Activated CD4-positive, alpha-beta memory T cell treated with anti-CD3 and anti-CD28 coated beads for 36 hours (primary cell): ENCODE measurements at regions of chr3 and their contacts with region 1.

Region 1: DNA sequence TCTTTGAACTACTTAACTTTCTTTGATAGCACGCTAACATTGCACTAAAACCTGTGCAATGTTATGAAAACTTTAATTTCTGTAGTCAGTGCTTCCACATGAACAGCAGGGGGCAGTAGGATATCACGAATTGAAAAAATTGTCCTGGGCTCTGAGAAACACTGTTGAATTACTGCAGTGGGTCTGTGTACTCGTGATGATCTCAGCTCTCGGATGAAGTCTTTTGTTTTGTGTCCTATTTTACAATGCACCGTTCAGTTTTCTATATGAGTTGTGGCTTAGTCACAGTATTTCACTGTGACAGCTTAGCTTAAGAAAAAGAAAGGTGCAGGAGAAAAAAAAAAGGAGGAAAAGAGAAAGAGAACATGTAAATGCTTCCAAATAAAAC is 141.3 kb upstream of the CCDC54 start:
- DNase-seq: peak; percentile 49
- H3K4me3 Mint-ChIP-seq: peak overlapping the region; percentile 20
- H3K27ac Mint-ChIP-seq: no peak overlapping the region
- H3K4me1 Mint-ChIP-seq: peaks cover 6% of the 10 kb centered on the region
- H3K27me3 Mint-ChIP-seq: peaks cover 10% of the 10 kb centered on the region

Region 2: DNA sequence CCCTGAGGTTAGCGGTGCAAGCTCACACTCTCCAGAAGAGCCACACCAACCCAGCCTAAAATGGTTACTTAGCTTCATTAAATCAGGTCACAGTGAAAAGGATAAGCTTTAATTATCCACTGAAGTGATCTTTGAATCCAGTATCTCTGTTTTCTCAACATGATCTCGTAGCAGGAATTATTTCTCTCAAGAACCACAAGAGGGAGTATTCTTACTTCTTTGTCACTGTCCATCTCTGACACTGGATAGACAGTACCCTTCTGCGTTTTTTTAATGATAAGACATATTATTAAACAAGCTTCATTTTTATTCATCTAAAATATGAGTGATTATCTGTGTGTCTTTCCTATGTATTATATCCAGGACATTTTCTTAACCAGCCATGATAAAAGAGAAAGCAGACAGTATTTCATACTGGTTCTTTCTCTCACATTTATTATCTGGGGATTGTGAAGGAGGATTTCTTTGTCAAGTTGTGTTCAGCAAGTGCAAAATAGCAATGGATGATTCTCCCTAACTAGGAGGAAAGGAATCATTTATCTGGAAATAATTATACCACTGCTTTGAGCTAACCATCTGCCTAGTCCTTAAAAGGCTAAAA is 36.0 kb after region 1 on chr3:
- CTCF ChIA-PET with region 1: interaction called, 24 read pairs
- POLR2A ChIA-PET with region 1: no interaction called
- intact Hi-C with region 1: loop called (anchors 1 kb)
- DNase-seq: no peak
- H3K4me3 Mint-ChIP-seq: no peak overlapping the region
- H3K27ac Mint-ChIP-seq: no peak overlapping the region
- H3K4me1 Mint-ChIP-seq: no peaks in the 10 kb centered on the region
- H3K27me3 Mint-ChIP-seq: peaks cover 18% of the 10 kb centered on the region

Region 3: DNA sequence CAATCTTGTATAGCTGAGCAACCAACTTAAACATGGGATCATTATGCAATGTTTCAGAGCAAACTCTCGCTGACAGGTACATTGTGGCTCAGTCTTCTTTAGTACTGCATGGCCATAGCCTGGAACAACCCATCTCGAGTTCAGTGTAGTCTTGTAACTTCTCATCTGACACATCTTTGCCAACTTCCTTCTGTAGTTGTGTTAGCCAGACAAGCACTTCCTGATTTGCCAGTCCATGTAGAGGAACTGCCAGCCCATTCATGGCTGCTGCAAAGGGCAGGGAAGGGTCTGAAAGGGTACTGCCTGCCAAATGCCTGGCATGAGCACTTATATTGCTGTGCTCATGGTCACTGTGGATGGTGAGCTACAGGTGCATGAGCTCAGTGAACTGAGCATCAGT is 92.1 kb after region 1 on chr3:
- CTCF ChIA-PET with region 1: no interaction called
- POLR2A ChIA-PET with region 1: no interaction called
- intact Hi-C with region 1: no loop called
- DNase-seq: no peak
- H3K4me3 Mint-ChIP-seq: no peak overlapping the region
- H3K27ac Mint-ChIP-seq: no peak overlapping the region
- H3K4me1 Mint-ChIP-seq: no peaks in the 10 kb centered on the region
- H3K27me3 Mint-ChIP-seq: no peaks in the 10 kb centered on the region

Region 4: DNA sequence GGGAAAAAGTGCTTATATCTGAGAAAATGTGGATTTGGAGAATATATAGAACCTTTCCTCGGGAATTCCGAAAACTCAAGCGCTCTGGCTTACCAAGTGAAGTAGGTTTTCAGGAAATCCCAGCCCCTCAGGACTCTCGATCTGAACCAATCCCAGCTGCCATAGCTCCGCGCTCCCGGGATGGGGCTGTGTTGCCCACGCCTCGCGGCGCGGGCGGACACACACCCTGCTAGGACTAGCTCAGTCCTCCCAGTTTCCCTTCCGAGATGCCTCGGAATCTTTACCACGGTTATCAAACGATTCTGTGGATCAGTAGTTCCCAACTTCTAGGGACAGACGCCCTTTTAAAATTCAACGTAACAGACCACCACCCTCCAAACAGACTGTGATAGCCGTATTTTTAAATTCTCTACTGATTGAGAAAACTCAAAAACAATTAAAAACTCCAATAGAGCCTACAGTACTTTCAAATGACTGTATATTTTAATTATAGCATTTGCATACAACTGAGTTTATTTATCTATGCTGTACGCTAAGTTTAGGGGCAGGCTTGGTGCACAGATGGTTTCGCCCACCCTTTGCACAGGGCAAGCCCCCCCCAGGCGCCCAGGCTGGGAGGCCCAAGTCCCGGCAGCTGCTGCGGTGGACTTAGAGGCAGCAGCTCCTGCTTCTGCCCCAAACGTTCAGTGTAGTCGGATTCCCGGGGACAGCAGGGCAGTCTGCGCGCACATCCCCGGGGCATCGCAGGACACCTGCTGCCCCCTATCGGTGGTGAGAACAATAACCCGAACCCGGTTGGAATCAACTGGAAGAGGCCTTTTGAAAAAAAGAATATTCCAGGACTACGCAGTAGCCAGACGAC is 193.6 kb after region 1 on chr3:
- CTCF ChIA-PET with region 1: interaction called, 31 read pairs
- POLR2A ChIA-PET with region 1: no interaction called
- intact Hi-C with region 1: loop called (anchors 1 kb)
- DNase-seq: peak; percentile 71
- H3K4me3 Mint-ChIP-seq: peak overlapping the region; percentile 62
- H3K27ac Mint-ChIP-seq: no peak overlapping the region
- H3K4me1 Mint-ChIP-seq: peaks cover 12% of the 10 kb centered on the region
- H3K27me3 Mint-ChIP-seq: peaks cover 3% of the 10 kb centered on the region

Region 5: DNA sequence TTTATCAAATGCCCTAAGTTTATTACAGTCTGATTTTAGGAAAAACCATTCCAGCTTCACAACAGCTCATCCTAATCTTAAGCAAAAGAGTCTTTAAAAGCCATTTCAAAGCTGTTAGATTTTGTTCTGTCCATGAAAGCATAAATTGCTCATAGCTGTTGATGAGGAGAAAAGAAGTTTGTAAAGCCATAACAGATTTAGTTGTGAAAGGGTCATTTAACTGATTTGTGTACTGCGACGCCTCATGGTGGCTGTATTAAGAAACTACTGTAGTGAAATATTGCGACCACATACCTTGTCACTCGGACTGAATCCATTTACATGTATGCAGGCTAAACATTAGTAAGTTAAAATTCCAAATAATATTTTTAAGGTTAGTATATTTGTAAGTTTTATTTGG is 307.7 kb after region 1 on chr3:
- CTCF ChIA-PET with region 1: interaction called, 5 read pairs
- POLR2A ChIA-PET with region 1: no interaction called
- intact Hi-C with region 1: loop called (anchors 1 kb)
- DNase-seq: no peak
- H3K4me3 Mint-ChIP-seq: no peak overlapping the region
- H3K27ac Mint-ChIP-seq: no peak overlapping the region
- H3K4me1 Mint-ChIP-seq: peaks cover 26% of the 10 kb centered on the region
- H3K27me3 Mint-ChIP-seq: no peaks in the 10 kb centered on the region

Region 6: GRCh38 chr3:107676469-107677309 is 440.8 kb after region 1 on chr3:
- CTCF ChIA-PET with region 1: interaction called, 8 read pairs
- POLR2A ChIA-PET with region 1: no interaction called
- intact Hi-C with region 1: loop called (anchors 10 kb)
- DNase-seq: no peak
- H3K4me3 Mint-ChIP-seq: no peak overlapping the region
- H3K27ac Mint-ChIP-seq: no peak overlapping the region
- H3K4me1 Mint-ChIP-seq: peaks cover 23% of the 10 kb centered on the region
- H3K27me3 Mint-ChIP-seq: no peaks in the 10 kb centered on the region

Region 7: GRCh38 chr3:107846279-107846852 is 610.4 kb after region 1 on chr3:
- CTCF ChIA-PET with region 1: interaction called, 3 read pairs
- POLR2A ChIA-PET with region 1: no interaction called
- intact Hi-C with region 1: loop called (anchors 1 kb)
- DNase-seq: peak; percentile 60
- H3K4me3 Mint-ChIP-seq: no peak overlapping the region
- H3K27ac Mint-ChIP-seq: no peak overlapping the region
- H3K4me1 Mint-ChIP-seq: no peaks in the 10 kb centered on the region
- H3K27me3 Mint-ChIP-seq: no peaks in the 10 kb centered on the region